ENCODE measurements at regions of chr5 and their contacts with region 1.

Region 1: DNA sequence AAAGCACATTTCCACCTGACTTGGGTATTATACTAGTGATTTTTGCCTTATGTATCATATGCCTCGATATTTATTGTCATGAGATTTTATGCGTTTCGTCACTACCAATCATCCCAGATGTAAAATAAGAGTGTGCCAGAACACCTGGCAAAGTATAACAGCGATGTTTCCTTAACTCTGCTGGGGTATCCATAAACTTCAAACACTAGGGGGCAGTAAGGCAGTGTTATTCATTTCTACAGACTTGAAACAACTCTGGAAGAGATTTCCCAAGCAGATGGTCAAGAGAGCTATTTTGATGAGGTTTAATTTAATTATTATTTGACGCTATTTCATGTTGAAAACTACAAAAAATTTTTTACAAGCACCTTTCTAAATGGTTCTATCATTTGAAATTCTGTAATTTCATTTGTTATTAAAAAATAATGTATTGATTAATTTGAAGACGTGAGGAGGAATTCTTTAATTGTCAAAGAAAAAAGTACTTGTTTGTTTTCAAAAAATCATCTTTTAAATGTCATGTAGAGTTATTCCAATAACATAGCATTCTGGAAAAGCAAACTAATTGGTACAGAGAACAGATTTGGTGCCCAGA is 388.5 kb upstream of the CTNND2 start:
- DNase-seq: no peak

Region 2: DNA sequence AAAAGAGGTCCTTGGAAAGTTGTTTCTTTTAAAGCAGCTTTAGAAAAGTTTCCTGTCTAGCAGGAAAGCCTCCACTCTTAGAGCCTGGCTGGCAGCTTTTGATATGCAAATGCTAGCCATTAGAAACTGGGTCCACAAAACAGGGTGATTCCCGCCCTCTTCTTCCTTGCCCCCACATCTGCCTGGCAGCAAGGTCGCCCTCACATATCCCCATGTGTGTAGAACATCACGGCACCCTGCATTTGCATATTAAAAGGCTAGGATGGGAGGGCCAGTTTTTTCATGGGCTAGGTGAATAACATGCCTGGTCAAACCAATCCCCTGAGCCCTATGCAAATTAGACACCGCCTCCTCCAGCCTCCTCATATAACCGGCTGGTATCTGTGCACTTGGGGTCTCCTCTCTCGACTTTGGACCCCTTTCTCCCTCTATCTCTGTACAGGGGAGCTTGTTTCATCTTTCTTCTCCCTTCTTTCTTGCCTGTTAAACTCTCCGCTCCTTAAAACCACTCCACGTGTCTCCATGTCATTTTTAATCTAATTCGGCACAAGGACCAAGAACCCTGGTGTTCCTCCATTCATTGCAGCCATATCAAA is 38.4 kb after region 1 on chr5:
- intact Hi-C with region 1: no loop called
- DNase-seq: no peak

Region 3: DNA sequence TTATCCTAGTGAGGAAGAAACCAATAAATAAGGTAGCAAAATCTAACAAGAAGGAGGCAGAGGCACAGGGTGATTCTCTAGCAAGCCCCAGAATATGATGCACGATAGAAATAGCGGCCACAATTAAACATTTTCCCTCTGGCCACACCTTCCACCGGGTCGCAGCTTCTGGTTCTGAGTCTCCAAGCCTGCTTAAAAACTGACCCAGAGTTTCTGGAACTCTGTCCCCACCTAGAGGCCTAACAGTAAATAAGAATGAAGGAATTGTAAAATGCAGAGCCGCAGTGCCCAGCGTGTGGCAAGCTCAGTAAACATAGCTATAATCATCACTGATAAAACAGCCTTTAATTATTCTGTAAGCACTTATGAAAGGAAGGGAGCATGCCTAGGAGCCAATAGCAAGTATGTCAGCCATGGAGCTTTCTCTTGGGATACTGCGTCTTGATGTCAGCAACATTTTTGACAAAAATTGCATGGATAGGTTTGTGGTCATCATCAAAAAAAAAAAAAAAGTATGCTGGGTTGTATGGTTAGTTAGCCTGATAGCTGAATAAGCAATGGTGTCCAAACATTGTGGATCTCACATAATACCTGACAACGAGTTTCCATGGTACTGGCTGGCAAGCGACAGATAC is 1186.2 kb after region 1 on chr5:
- intact Hi-C with region 1: loop called (anchors 10 kb)
- DNase-seq: peak in 5 of 10 donors; percentile 16 to 79 (median 21)